ENCODE measurements at regions of chr3 and their contacts with region 1.

Region 1: GRCh38 chr3:46284981-46285683 is 42.9 kb downstream of the CCR3 start:
- DNase-seq: peak; percentile 56
- H3K4me3 Mint-ChIP-seq: peak overlapping the region; percentile 25
- H3K27ac Mint-ChIP-seq: peak overlapping the region; percentile 54
- H3K4me1 Mint-ChIP-seq: peaks cover 74% of the 10 kb centered on the region
- H3K27me3 Mint-ChIP-seq: peaks cover 5% of the 10 kb centered on the region

Region 2: DNA sequence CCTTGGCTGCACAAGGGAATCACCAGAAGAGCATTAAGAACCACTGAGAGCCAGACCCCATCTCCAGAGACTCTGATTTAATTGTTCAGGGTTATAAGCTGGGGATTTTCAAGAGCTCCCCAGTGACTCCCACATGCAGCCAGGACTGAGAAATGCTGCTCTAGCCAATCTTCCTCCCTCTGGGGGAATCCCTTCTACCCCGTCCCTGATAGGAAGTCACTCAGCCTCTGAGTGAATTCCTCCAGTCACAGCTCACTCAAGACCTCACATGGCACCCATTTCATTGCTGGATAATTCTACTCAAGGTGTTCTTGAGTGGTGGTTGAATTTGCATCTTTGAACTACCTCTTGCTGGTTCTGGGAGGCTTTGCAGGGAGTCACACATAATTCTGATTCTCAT is 32.2 kb before region 1 on chr3:
- CTCF ChIA-PET with region 1: no interaction called
- POLR2A ChIA-PET with region 1: no interaction called
- DNase-seq: no peak
- H3K4me3 Mint-ChIP-seq: no peak overlapping the region
- H3K27ac Mint-ChIP-seq: no peak overlapping the region
- H3K4me1 Mint-ChIP-seq: no peaks in the 10 kb centered on the region
- H3K27me3 Mint-ChIP-seq: peaks cover 48% of the 10 kb centered on the region

Region 3: DNA sequence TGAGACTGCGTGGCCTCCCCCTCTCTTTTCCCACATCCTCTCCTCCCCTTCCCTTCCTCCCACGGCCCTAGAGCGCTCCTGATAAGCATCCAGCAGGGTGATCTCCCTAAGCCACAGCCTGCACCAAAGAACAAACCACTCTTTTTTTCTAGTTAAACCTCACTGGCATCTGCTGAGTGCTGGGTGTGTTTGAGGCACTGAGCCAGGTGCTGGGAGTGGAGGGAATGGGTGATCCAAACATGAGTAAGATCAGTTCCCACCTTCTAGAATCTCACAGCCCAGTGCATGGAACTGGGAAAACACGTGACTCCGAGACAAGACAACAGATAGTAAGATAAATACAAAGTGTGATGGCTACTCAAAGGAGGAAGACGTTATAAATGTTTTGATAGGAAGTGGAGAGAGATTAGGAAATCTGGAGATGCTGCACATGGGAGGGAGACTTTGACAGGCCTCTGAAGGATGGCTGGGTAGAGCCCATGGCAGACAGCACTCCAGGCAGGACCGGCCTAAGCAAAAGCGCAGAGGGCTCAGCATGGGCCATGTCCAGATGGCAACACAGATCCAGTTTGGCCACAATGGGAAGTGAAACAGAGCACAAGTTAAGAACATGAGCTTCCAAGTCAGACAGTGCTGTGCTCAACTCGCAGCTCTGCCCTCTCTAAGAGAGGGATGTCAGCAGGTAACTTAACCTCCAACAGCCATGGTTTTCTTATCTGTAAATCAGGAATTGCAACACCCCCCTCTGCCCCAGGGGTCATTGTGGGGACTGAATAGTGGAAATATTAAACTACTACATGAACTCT is 12.7 kb after region 1 on chr3:
- CTCF ChIA-PET with region 1: interaction called, 18 read pairs
- POLR2A ChIA-PET with region 1: interaction called, 4 read pairs
- DNase-seq: no peak
- H3K4me3 Mint-ChIP-seq: no peak overlapping the region
- H3K27ac Mint-ChIP-seq: peak overlapping the region; percentile 87
- H3K4me1 Mint-ChIP-seq: peaks cover 92% of the 10 kb centered on the region
- H3K27me3 Mint-ChIP-seq: no peaks in the 10 kb centered on the region